ENCODE measurements at regions of chr16 and their contacts with region 1.

Region 1: GRCh38 chr16:30698139-30698815 is 694 bp upstream of the SRCAP start:
- DNase-seq: peak; percentile 100
- H3K4me3 Mint-ChIP-seq: peak overlapping the region; percentile 97
- H3K27ac Mint-ChIP-seq: peak overlapping the region; percentile 100
- H3K4me1 Mint-ChIP-seq: peaks cover 34% of the 10 kb centered on the region
- H3K27me3 Mint-ChIP-seq: no peaks in the 10 kb centered on the region

Region 2: GRCh38 chr16:30678586-30678970 is 19.7 kb before region 1 on chr16:
- intact Hi-C with region 1: no loop called
- DNase-seq: no peak
- H3K4me3 Mint-ChIP-seq: no peak overlapping the region
- H3K27ac Mint-ChIP-seq: no peak overlapping the region
- H3K4me1 Mint-ChIP-seq: no peaks in the 10 kb centered on the region
- H3K27me3 Mint-ChIP-seq: no peaks in the 10 kb centered on the region

Region 3: GRCh38 chr16:30711712-30712111 is 13.4 kb after region 1 on chr16:
- intact Hi-C with region 1: loop called (anchors 2 kb)
- DNase-seq: no peak
- H3K4me3 Mint-ChIP-seq: no peak overlapping the region
- H3K27ac Mint-ChIP-seq: no peak overlapping the region
- H3K4me1 Mint-ChIP-seq: peaks cover 33% of the 10 kb centered on the region
- H3K27me3 Mint-ChIP-seq: no peaks in the 10 kb centered on the region

Region 4: DNA sequence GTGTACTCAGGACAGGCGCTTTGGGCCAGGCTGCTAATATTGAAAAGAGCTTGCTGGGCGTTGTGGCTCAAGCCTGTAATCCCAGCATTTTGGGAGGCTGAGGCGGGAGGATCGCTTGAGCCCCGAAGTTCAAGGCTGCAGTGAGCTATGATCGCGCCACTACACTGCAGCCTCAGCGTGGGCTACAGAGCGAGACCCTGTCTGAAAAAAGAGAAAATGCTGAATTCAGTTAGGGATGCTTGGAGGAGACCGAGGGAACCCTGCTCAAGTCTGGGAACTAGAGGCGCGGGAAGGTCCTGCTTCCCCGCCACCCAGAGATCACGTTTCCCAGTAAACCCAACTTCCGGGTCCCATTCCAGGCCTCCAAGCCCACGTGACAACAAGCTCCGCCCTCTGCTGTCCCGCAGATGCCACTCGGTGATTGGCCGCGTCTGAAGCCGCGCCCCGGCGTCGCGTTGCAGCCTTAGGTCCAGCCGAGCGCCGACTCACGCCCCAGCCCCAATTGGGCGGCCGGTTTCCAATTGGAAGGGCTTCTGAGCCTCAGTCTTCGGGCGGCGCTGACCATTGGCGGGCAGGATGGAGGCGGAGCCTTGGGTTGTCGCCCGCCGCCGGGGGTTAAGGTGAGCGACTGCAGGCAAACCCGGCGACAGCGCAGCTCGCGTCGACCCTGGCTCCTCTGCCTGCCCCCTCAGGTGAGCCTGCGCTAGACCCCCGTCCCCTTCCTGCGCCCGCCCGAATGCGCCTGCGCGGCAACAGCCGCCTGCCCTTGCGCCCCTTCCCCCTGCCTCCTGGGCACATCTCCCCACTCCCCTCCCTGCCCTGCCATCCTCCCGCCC is 49.7 kb after region 1 on chr16 and contains the start of gene PHKG2:
- intact Hi-C with region 1: loop called (anchors 1 kb)
- DNase-seq: peak; percentile 99
- H3K4me3 Mint-ChIP-seq: peak within 1 kb of the TSS; percentile 94
- H3K27ac Mint-ChIP-seq: peak within 1 kb of the TSS; percentile 85
- H3K4me1 Mint-ChIP-seq: peaks cover 21% of the 10 kb centered on the region
- H3K27me3 Mint-ChIP-seq: no peaks in the 10 kb centered on the region
- total RNA-seq, gene PHKG2: 39.5 and 41.0 TPM in 2 replicates